Psoas muscle (tissue), 8 donors: ENCODE measurements at regions of chr1 and their contacts with region 1.

Region 1: DNA sequence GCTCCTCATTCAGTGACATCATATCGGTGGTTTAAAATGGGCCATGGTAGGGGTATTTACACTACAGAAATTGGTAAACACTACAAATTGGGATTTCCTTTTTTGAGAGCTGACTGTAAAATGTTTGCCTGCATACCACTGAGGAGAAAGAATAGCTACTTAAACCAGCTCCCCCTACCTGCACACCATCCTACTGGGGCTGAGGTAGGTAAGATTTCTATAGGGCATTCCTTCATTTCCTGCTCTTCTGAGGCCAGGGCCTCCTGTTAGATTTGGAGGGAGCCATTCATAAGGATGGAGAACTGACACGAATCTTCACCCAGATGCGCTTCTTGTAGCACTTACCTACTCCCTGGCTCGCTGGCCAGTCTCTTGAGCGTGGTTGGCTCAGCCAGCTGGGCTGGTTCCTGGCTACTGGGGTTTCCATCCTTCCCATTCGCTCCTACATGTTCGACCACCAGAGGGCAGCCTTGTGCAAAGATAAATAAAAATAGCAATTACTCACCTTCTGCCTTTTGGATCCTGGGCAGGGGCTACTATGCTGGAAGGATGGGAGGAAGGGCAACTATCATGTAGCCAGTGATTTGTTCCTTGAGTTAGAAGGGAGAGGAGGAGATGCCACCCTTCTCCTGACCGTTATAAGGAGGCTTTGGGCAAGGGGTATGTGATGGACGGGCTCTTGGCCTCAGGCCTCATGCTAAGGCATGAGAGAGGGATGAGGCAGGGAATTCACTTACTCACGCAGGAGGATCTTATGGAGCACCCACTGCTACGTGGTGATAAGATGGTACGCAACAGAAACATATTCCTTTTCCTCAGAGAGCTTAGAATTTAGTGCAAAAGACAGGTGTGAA is 10.7 kb downstream of the OPTC start:
- DNase-seq: peak; percentile 82 to 88
- ATAC-seq: peak; percentile 82 to 96 (median 92)
- H3K4me3 ChIP-seq: no peak overlapping the region
- H3K27ac ChIP-seq: no peak overlapping the region
- H3K4me1 ChIP-seq: peaks cover 12% of the 10 kb centered on the region
- H3K27me3 ChIP-seq: no peaks in the 10 kb centered on the region
- CTCF ChIP-seq: peak; percentile 90

Region 2: DNA sequence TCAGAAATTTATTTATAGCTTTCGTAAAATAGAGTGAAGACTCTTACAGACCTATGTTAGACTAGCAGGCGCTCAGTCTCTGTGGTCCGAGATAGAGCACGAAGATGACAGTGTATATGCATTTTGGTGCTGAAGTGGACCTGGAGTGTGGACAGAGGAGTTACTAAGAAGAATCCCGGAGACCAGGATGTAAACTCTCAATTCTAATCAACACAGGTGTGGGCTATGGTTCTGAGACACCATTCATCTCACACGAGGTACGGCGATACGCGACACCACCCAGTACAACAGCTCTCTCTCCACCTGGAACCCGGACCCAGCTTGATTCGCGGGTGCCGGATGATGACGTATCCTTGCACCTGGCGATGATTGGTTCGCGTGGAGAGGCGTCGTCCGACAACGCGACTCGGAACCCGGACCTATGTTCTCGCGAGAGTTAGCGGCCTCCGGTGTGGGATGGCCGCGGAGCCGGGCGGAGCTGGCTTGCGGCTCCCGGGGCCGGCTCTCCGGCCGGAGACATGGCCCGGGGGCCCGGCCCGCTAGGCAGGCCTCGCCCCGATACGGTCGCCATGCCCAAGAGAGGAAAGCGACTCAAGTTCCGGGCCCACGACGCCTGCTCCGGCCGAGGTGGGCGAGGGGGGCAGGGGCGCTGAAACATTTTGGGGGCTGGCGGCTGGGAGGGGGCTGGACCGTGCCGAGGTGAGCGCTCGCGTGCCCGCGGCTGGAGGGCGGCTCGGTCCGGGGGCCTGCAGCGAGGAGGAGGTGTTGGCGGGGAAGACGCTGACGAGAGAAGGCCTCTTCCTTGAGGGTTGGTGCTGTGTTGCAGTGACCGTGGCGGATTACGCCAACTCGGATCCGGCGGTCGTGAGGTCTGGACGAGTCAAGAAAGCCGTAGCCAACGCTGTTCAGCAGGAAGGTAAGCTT is 497.4 kb before region 1 on chr1 and contains the start of gene TMEM183A:
- intact Hi-C with region 1: no loop called
- DNase-seq: peak; percentile 96 to 98
- ATAC-seq: peak; percentile 98 to 99 (median 98)
- H3K4me3 ChIP-seq: peak within 1 kb of the TSS; percentile 74
- H3K27ac ChIP-seq: peak within 1 kb of the TSS; percentile 90
- H3K4me1 ChIP-seq: peaks cover 14% of the 10 kb centered on the region
- H3K27me3 ChIP-seq: no peaks in the 10 kb centered on the region
- CTCF ChIP-seq: no peak
- total RNA-seq, gene TMEM183A: 17.1 to 25.6 (median 19.2) TPM

Region 3: GRCh38 chr1:203127666-203128430 is 376.8 kb before region 1 on chr1 and contains the start of gene ADORA1:
- intact Hi-C with region 1: no loop called
- DNase-seq: peak; percentile 64 to 76
- ATAC-seq: peak; percentile 82 to 96 (median 90)
- H3K4me3 ChIP-seq: peak within 1 kb of the TSS; percentile 73
- H3K27ac ChIP-seq: peak within 1 kb of the TSS; percentile 64
- H3K4me1 ChIP-seq: peaks cover 42% of the 10 kb centered on the region
- H3K27me3 ChIP-seq: peaks cover 0 to 8% (median 2%) of the 10 kb centered on the region in 3 donors
- CTCF ChIP-seq: no peak
- total RNA-seq, gene ADORA1: 1.2 to 10.4 (median 6.1) TPM

Region 4: GRCh38 chr1:203615061-203615581 is 110.5 kb after region 1 on chr1:
- intact Hi-C with region 1: loop called in 1 of 2 experiments (anchors 5 kb)
- DNase-seq: no peak
- ATAC-seq: peak in 1 of 4 donors; percentile 39
- H3K4me3 ChIP-seq: no peak overlapping the region
- H3K27ac ChIP-seq: no peak overlapping the region
- H3K4me1 ChIP-seq: no peaks in the 10 kb centered on the region
- H3K27me3 ChIP-seq: no peaks in the 10 kb centered on the region
- CTCF ChIP-seq: no peak

Region 5: DNA sequence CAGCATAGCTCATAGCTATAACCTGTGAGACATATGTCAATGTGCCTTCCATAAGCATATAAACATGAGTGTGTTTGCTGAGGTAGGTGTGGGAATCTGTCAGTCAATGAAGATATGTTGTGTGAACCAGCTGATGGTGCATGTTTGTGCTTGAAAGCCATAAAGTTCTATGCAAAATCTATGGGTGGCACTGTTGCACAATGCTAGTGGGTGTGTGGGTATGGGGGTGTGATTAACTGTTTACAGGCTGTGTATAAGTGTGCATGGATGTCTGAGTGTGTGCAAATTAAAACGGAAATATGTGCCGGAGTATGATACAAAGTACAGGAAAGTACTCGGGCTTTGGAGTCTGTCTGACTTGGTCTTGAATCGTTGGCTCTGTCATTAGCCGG is 121.0 kb after region 1 on chr1:
- intact Hi-C with region 1: loop called in 1 of 2 experiments (anchors 5 kb)
- DNase-seq: no peak
- ATAC-seq: peak; percentile 23 to 33 (median 28)
- H3K4me3 ChIP-seq: no peak overlapping the region
- H3K27ac ChIP-seq: peak overlapping the region; percentile 58
- H3K4me1 ChIP-seq: peaks cover 22% of the 10 kb centered on the region
- H3K27me3 ChIP-seq: peaks cover 0 to 2% (median 0%) of the 10 kb centered on the region in 3 donors
- CTCF ChIP-seq: no peak

Region 6: DNA sequence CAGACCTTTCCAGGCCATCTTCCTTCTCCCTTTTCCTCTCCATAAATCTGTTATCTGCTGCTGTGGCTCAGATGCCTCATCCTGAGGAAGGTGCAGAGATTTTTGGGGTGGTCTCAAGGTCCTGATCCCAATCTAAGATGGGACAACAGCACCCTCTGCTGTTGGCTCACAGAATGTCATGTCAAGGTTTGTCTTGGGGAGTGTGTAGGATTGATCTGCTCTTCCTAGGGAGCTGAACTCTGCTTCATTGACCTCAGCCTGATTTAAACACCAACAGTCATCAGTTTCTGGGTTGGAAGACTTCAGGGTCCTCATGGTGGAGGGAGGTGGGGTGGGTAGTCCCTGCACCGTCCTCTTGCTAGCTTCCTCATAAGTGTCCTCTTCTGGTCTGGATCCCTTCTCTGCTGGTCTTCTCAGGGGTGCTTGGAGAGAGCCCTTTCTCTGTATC is 197.5 kb after region 1 on chr1:
- intact Hi-C with region 1: loop called (anchors 1 to 2 kb)
- DNase-seq: peak; percentile 29 to 62
- ATAC-seq: peak; percentile 67 to 91 (median 78)
- H3K4me3 ChIP-seq: no peak overlapping the region
- H3K27ac ChIP-seq: no peak overlapping the region
- H3K4me1 ChIP-seq: no peaks in the 10 kb centered on the region
- H3K27me3 ChIP-seq: no peaks in the 10 kb centered on the region
- CTCF ChIP-seq: peak; percentile 86

Region 7: DNA sequence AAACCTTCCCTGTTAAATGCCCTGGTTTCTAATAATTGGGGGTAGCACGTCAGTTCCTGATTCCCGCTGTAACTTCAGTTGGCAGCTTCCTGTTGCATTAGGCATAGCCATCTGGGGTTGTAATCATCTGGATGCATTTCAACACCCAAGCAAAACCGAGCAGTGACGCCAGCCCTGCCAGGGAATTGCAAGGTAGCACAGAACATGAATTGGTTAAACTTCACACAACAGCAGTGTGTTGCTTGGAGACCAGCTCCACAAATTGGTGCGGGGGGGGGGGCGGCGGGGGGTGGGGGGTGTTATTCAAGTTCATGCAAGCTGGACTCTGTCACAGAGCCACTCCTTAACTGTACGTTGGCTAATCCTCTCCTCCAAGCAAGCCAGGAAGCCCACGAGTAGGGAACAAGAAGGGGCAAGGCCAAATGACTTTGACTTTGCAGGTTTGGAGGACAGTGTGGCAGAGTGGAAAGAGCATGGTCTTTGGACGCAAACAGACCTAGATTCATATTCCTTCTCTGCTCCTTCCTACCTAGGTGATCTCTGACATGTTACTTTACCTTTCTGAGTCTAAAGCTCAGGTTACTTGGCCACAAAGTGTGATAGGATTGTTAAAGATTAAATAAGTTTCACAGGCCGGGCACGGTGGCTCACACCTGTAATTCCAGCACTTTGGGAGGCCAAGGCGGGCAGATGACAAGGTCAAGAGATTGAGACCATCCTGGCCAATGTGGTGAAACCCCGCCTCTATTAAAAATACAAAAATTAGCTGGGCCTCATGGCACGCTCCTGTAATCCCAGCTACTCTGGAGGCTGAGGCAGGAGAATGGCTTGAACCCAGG is 265.1 kb after region 1 on chr1:
- intact Hi-C with region 1: loop called (anchors 10 kb)
- DNase-seq: peak; percentile 75 to 88
- ATAC-seq: peak; percentile 78 to 85 (median 82)
- H3K4me3 ChIP-seq: peak overlapping the region; percentile 56
- H3K27ac ChIP-seq: peak overlapping the region; percentile 64
- H3K4me1 ChIP-seq: peaks cover 20% of the 10 kb centered on the region
- H3K27me3 ChIP-seq: no peaks in the 10 kb centered on the region
- CTCF ChIP-seq: no peak